A549 (cell line): ENCODE measurements at regions of chr19 and their contacts with region 1.

Region 1: GRCh38 chr19:3108775-3109174 is 14.6 kb downstream of the GNA11 start:
- DNase-seq: peak in 1 of 2 experiments; percentile 55
- ATAC-seq: peak; percentile 67 to 77
- H3K4me3 ChIP-seq: no peak overlapping the region
- H3K27ac ChIP-seq: no peak overlapping the region
- H3K4me1 ChIP-seq: 0 out of 3 replicates have a peak, but pooled peaks cover under 1% of the 10 kb centered on the region
- CTCF ChIP-seq: peak; percentile 59
- EP300 ChIP-seq: no peak
- POLR2A ChIP-seq: no peak
- RAD21 ChIP-seq: peak in 1 of 2 experiments; percentile 39; a peak in 3 of 5 replicates

Region 2: DNA sequence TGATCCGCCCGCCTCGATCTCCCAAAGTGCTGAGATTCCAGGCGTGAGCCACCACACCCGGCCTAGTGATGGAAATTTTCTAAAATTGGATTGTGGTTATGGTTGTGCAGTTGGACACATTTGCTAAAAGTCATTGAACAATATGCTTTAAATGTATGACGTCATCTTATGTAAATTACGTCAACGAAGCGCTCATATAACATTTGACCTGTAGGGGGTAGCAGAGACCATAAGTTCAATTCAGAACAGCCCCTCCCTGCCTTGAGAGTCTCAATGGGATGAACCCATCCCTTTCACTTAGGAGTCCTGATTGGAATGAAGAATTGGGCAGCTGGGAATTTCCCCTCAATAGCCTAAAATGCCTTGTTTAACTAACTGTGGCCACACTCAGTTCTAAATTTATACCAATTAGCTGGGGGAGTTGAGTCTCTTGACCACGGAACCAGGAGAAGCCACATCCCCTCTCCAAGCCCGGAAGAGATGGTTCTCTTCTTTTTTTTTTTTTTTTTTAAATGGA is 146.7 kb before region 1 on chr19:
- CTCF ChIA-PET with region 1: interaction called, 127 read pairs
- POLR2A ChIA-PET with region 1: no interaction called
- DNase-seq: peak; percentile 24 to 66
- ATAC-seq: peak in 1 of 2 experiments; percentile 51; a peak in 4 of 6 replicates
- H3K4me3 ChIP-seq: no peak overlapping the region
- H3K27ac ChIP-seq: no peak overlapping the region
- H3K4me1 ChIP-seq: no peaks in the 10 kb centered on the region
- CTCF ChIP-seq: peak; percentile 72
- EP300 ChIP-seq: no peak
- POLR2A ChIP-seq: no peak
- RAD21 ChIP-seq: peak; percentile 77

Region 3: GRCh38 chr19:3094601-3095437 is 14.0 kb before region 1 on chr19:
- CTCF ChIA-PET with region 1: interaction called, 15 read pairs
- POLR2A ChIA-PET with region 1: no interaction called
- DNase-seq: no peak
- ATAC-seq: peak; percentile 23 to 32; a peak in 4 of 6 replicates
- H3K4me3 ChIP-seq: peak overlapping the region; percentile 94
- H3K27ac ChIP-seq: peak overlapping the region; percentile 82 to 90
- H3K4me1 ChIP-seq: peaks cover 10% of the 10 kb centered on the region; the same call in 2 of the 3 replicates
- CTCF ChIP-seq: no peak
- EP300 ChIP-seq: no peak
- POLR2A ChIP-seq: no peak
- RAD21 ChIP-seq: no peak

Region 4: DNA sequence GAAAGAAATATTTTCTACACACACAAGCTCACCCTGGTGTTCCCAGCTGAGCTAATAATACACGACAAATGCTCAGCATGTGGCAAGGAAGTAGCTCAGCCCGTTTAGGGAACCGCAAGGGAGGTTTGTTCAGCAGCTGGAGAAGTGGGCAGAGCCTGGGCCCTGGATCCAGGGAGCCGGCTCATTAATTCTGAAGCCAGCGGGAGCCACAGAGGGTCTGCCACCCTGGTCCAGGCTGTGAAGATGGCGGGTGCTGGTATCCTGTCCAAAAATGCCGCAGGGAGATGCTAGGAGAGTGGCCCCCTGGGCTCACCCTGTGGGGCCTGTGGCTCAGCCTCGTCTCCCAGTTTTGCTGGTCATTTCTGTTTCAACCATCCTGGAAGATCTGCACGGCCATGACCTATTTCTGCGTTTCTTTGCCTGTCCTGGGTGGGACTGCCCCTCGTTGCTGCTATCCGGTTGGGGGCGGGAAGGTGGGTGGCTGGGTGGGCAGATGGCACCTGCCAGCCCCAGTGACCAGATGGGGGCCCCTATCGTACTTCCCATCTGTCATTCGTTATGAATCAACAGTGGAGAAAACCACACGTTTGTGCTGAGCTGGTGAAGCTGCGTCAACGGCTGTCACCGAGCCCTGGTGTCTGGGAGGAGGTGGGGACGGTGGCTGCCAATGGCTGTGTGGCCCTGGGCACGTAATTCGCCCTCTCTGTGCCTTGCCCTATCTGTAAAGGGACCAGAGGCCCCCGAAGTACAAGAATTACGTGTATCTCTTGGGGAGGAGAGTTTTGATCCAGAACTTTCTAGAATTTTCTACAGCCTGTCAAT is 24.4 kb after region 1 on chr19:
- CTCF ChIA-PET with region 1: interaction called, 18 read pairs
- POLR2A ChIA-PET with region 1: no interaction called
- DNase-seq: no peak
- ATAC-seq: no peak
- H3K4me3 ChIP-seq: no peak overlapping the region
- H3K27ac ChIP-seq: no peak overlapping the region
- H3K4me1 ChIP-seq: no peaks in the 10 kb centered on the region
- CTCF ChIP-seq: no peak
- EP300 ChIP-seq: no peak
- POLR2A ChIP-seq: no peak
- RAD21 ChIP-seq: no peak